GM18951 (cell line): ENCODE measurements at regions of chr15 and their contacts with region 1.

Region 1: GRCh38 chr15:101641166-101641764 is 10.9 kb downstream of the TM2D3 start:
- POLR2A ChIP-seq: no peak

Region 2: DNA sequence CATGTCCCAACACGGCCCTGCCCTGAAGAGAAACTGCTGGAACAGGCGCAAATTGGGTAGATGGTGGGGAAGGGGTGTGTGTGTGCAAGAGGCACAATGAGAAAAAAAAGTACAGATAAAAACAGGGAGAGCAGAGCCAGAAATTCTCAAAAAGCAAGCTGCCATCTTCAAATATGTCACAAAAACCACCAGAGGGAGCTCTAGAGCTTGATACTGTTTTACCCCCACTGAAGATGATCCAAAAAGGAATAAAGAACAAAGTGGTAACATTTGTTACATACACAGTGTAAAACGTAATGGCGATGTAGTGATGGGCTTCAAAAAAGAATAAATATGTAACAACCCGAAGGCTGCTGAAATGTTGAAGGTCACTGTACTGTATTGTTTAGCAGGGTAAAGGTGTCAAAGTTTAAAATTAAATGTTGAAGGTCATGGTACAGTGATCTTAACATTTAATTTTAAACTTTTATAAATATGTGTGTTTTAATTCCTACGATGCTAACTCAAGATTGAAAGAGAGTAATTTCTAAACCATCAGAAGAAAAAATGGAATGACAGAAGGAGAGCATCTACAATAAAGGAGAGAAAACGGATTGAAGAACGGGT is 352.3 kb before region 1 on chr15:
- in situ Hi-C with region 1: loop called (anchors 5 kb)
- POLR2A ChIP-seq: no peak

Region 3: GRCh38 chr15:101348643-101349548 is 292.4 kb before region 1 on chr15:
- in situ Hi-C with region 1: no loop called
- POLR2A ChIP-seq: no peak

Region 4: DNA sequence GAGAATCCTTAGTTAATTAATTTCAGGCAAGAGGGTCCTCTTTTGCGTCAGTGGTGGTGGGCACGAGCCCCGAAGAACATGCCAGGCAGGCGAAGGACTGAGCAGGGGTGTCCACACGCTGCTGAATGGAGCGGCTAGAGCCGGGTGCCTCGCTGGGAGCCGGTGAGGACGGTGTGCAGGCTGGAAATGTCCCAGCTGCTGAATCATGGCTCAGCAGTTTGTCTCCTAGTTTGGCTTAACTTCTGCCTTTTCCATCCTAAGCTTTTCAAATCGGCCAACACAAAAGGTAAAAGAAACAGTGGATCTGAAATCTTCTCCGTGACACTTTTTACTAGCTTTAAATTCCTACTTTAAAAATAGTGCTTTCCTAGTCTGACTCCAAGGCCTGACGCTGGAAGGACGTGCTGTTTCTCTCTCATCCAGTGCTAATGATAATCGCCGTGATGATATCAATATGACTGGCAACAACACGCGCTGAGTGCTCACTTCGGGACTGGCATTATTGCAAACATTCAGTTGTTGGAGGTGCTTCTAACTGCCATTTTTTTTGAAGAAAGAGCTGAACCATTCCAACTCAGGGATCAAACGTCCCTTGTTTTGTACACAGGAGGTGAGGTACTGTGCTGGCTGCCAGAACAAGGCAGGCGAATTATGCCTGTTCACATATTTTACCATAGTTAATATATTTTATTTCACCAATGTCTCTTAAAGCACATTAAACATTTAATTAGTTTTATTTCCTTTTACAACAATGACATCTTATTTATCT is 171.6 kb before region 1 on chr15:
- in situ Hi-C with region 1: no loop called
- POLR2A ChIP-seq: no peak

Region 5: DNA sequence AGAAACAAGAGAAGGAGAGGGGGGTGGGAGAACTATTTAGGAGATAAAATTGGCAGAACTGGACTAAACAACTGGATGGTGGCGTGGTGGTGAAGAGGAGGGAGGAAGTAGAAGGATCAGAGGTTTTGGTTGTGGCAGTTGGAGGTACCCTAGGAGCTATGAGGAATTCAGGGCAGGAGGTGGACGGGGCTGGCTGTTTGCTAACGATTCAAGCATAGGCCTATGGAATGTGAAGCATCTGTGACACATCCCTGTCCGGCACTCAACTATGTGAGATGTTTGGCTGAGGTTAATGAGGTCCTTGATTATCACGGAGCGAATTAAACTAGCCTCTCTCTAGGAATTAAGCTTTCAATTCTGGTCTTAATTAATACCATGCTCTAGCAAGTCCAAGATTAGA is 69.5 kb after region 1 on chr15:
- in situ Hi-C with region 1: no loop called
- POLR2A ChIP-seq: no peak